Transverse colon (tissue), 4 donors: ENCODE measurements at regions of chr13 and their contacts with region 1.

Region 1: DNA sequence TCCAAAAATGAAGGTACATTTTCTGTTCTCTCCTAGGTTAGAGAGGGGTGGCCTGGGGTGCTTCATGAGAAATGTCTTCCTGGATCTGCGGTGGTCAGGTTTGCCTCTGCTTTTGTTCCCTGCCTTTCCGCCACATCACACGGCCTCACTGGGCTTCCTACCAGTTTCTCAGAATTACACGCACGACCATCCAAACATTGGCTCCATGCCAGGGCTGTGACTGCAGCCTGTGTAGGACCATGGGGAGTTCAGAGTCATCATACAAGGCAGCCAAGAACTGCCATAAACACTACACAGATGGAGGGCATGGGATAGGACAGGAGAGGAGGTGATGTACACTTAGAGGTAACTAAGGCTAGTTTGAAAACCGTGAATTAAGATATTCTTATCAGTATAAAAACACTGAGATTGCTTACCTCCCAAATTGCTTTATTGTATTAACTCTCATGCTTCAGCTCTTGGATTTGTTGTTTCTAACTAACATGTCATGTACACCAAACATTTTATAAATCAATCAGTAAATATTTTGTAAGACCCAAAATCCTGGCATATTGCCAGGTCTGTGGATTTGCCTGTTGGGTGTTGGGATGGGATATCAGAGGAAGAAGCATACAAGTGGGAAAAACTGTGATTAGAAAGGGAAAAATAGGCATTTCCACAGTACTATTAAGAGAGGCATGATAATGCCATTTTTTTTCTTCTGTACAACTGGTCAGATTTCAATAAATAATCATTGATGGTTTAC is 45.2 kb downstream of the CDADC1 start:
- DNase-seq: no peak
- H3K4me3 ChIP-seq: no peak overlapping the region
- H3K27ac ChIP-seq: peak overlapping the region in 1 of 4 donors; percentile 39
- H3K4me1 ChIP-seq: peaks cover 0 to 5% (median 0%) of the 10 kb centered on the region in 4 donors
- H3K27me3 ChIP-seq: no peaks in the 10 kb centered on the region
- CTCF ChIP-seq: no peak
- EP300 ChIP-seq: no peak
- POLR2A ChIP-seq: no peak

Region 2: DNA sequence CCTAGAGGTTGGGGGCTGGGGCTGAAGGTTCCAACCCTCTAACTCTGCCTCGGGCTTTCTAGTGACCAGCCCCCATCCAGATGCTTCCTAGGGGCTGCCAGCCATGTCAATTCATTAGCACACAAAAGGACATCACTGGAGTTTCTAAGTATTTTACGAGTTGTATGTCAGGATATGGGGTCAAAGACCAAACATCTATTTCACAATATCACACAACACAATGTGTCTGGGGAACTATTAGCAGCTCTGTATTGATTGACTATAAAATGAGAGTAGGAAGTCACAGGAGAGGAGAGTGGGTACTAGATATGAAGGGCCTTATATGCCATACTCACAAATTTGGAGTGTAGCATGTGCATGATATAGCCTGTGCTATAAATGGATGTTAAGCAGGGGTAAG is 922.1 kb before region 1 on chr13:
- in situ Hi-C with region 1: no loop called
- intact Hi-C with region 1: no loop called
- DNase-seq: no peak
- H3K4me3 ChIP-seq: no peak overlapping the region
- H3K27ac ChIP-seq: no peak overlapping the region
- H3K4me1 ChIP-seq: no peaks in the 10 kb centered on the region
- H3K27me3 ChIP-seq: no peaks in the 10 kb centered on the region
- CTCF ChIP-seq: no peak
- EP300 ChIP-seq: no peak
- POLR2A ChIP-seq: no peak

Region 3: DNA sequence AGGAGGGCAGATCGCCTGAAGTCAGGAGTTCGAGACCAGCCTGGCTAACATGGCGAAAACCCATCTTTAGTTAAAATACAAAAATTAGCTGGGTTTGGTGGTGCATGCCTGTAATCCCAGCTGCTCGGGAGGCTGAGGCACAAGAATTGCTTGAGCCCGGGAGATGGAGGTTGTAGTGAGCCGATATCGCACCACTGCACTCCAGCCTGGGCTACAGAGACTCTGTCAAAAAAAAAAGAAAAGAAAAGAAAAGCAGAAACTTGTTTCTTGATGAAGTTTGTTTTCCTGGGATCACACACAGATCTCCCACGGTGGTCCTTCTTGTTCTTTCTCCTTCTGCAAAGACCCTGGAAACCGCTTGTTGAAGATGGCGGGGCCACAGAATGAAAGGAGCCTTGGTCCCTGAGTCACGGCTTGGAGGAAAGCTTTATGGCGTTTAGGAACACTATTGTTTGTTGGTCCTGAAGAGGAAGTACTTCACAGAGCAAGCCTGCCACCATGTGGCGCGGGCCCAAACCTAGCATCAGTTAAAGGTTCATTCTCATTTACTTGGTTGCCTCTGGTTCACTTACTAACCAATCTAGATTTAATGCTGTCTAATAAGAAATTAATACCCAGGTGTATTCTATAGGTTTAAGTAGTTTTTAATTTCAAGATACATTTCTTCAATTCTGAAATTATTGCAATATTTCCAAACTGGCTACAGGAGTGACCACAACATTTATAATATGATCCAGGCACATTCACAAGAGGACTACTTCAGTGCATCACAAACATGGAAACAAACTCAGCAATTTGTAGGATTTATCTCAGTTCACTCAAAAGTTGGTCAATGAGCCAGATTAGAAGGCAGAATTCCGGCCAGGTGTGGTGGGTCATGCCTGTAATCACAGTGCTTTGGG is 314.1 kb after region 1 on chr13:
- in situ Hi-C with region 1: loop called in 2 of 4 experiments (anchors 10 to 25 kb)
- intact Hi-C with region 1: no loop called
- DNase-seq: peak; percentile 88
- H3K4me3 ChIP-seq: peak overlapping the region in 3 of 4 donors; percentile 13 to 43 (median 19)
- H3K27ac ChIP-seq: no peak overlapping the region
- H3K4me1 ChIP-seq: peaks cover 0 to 14% (median 0%) of the 10 kb centered on the region in 4 donors
- H3K27me3 ChIP-seq: no peaks in the 10 kb centered on the region
- CTCF ChIP-seq: peak; percentile 64 to 82 (median 68)
- EP300 ChIP-seq: no peak
- POLR2A ChIP-seq: no peak